Natural killer cell (primary cell): ENCODE measurements at regions of chr15 and their contacts with region 1.

Region 1: DNA sequence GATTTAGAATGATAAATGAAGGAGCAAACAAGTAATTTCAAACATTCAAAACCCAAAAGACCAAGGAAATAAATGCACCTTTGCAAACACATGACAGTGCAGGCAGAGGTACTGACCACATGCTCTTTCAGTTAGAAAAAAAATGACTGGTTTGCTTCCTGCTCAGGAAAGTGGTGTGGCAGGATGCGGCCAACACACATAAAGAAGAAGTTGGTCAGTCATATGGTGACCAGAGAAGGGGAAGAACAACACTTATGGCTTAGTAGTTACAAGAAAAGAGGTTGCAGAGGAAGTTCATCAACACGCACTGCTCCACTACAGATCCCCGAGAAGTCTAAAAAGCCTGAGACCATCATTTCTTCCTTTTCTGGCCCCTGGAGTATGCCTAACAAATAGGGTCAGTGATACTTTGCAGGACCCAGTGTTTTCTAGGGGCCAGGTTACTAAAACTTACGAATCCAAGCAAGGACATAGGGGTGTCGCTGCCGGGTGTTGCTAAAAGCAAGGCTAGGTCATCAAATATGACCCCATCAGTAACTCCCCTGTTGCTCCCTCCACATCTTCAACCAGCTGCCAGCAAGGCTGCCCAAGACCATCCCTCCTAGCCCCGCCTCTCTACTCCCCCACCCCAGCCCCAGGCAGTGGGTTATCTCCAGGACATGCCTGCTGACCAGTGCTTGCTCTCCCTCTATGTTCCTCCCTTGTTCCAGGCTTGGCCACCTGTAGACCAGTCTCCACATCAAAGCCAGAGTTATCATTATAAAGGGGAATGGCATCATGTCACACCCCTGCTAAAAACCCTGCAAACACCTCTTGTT is 11.2 kb downstream of the ATP8B4 start:
- DNase-seq: peak in 1 of 2 donors; percentile 19
- ATAC-seq: peak; percentile 68 to 91 (median 74)
- H3K4me3 ChIP-seq: no peak overlapping the region
- H3K4me3 Mint-ChIP-seq: peak overlapping the region; percentile 82
- H3K27ac ChIP-seq: peak overlapping the region; percentile 74
- H3K27ac Mint-ChIP-seq: peak overlapping the region; percentile 91 to 92
- H3K4me1 ChIP-seq: peaks cover 39% of the 10 kb centered on the region
- H3K4me1 Mint-ChIP-seq: peaks cover 77 to 92% of the 10 kb centered on the region in 2 donors
- H3K27me3 ChIP-seq: no peaks in the 10 kb centered on the region
- H3K27me3 Mint-ChIP-seq: no peaks in the 10 kb centered on the region
- CTCF ChIP-seq: no peak

Region 2: GRCh38 chr15:49620658-49621368 is 487.0 kb before region 1 on chr15 and contains the starts of genes DTWD1 and FAM227B:
- intact Hi-C with region 1: loop called (anchors 5 kb)
- DNase-seq: peak; percentile 88 to 97
- ATAC-seq: peak; percentile 96 to 100 (median 98)
- H3K4me3 ChIP-seq: peak within 1 kb of the TSS; percentile 97
- H3K4me3 Mint-ChIP-seq: peak within 1 kb of the TSS; percentile 98
- H3K27ac ChIP-seq: peak within 1 kb of the TSS; percentile 82
- H3K27ac Mint-ChIP-seq: peak within 1 kb of the TSS; percentile 96 to 97
- H3K4me1 ChIP-seq: peaks cover 6% of the 10 kb centered on the region
- H3K4me1 Mint-ChIP-seq: peaks cover 33 to 37% of the 10 kb centered on the region in 2 donors
- H3K27me3 ChIP-seq: no peaks in the 10 kb centered on the region
- H3K27me3 Mint-ChIP-seq: no peaks in the 10 kb centered on the region
- CTCF ChIP-seq: no peak
- total RNA-seq, gene DTWD1: 10.0 to 14.1 (median 12.3) TPM
- total RNA-seq, gene FAM227B: 3.8 to 5.0 (median 4.9) TPM

Region 3: GRCh38 chr15:49863431-49864205 is 244.2 kb before region 1 on chr15:
- intact Hi-C with region 1: no loop called
- DNase-seq: no peak
- ATAC-seq: no peak
- H3K4me3 ChIP-seq: no peak overlapping the region
- H3K4me3 Mint-ChIP-seq: no peak overlapping the region
- H3K27ac ChIP-seq: no peak overlapping the region
- H3K27ac Mint-ChIP-seq: no peak overlapping the region
- H3K4me1 ChIP-seq: no peaks in the 10 kb centered on the region
- H3K4me1 Mint-ChIP-seq: peaks cover 0 to 7% of the 10 kb centered on the region in 2 donors
- H3K27me3 ChIP-seq: no peaks in the 10 kb centered on the region
- H3K27me3 Mint-ChIP-seq: no peaks in the 10 kb centered on the region
- CTCF ChIP-seq: no peak

Region 4: DNA sequence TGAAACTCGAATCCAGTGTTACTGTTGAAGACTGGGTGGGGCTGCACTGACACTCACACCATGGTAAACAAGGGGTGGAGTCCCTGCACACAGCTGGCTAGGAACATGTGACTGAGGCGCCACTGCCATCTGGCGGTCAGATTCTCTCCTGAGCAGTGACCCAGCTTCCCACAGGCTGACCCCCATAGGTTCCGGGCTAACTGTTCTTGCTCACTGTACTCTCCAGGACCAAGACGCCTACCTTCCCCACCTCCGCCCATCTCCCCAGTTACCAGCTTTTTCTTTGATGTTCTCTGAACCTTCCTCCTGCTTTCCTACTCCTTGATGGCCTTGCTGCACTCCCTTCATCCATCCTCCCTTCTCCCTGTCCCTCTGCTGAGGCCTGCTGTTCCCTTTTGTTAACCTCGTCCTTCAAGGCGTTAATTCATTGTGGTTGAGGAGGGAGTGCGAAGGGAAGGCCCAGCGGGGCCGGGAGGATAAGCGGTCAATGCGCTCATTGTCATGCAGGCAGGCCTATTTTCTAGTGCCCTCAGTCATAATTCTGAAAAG is 103.9 kb before region 1 on chr15:
- intact Hi-C with region 1: loop called (anchors 5 kb)
- DNase-seq: peak; percentile 74 to 79
- ATAC-seq: peak; percentile 97 to 99 (median 99)
- H3K4me3 ChIP-seq: no peak overlapping the region
- H3K4me3 Mint-ChIP-seq: peak overlapping the region; percentile 75
- H3K27ac ChIP-seq: peak overlapping the region; percentile 66
- H3K27ac Mint-ChIP-seq: peak overlapping the region; percentile 88 to 95
- H3K4me1 ChIP-seq: peaks cover 13% of the 10 kb centered on the region
- H3K4me1 Mint-ChIP-seq: peaks cover 25 to 30% of the 10 kb centered on the region in 2 donors
- H3K27me3 ChIP-seq: no peaks in the 10 kb centered on the region
- H3K27me3 Mint-ChIP-seq: no peaks in the 10 kb centered on the region
- CTCF ChIP-seq: peak; percentile 73

Region 5: GRCh38 chr15:50046867-50047266 is 60.9 kb before region 1 on chr15:
- intact Hi-C with region 1: loop called (anchors 5 kb)
- DNase-seq: no peak
- ATAC-seq: peak; percentile 76 to 82 (median 80)
- H3K4me3 ChIP-seq: no peak overlapping the region
- H3K4me3 Mint-ChIP-seq: no peak overlapping the region
- H3K27ac ChIP-seq: peak overlapping the region; percentile 83
- H3K27ac Mint-ChIP-seq: peak overlapping the region; percentile 89 to 95
- H3K4me1 ChIP-seq: peaks cover 2% of the 10 kb centered on the region
- H3K4me1 Mint-ChIP-seq: peaks cover 41 to 53% of the 10 kb centered on the region in 2 donors
- H3K27me3 ChIP-seq: no peaks in the 10 kb centered on the region
- H3K27me3 Mint-ChIP-seq: no peaks in the 10 kb centered on the region
- CTCF ChIP-seq: no peak

Region 6: GRCh38 chr15:50066192-50066591 is 41.6 kb before region 1 on chr15:
- intact Hi-C with region 1: loop called (anchors 2 kb)
- DNase-seq: peak; percentile 45 to 48
- ATAC-seq: peak; percentile 84 to 94 (median 90)
- H3K4me3 ChIP-seq: no peak overlapping the region
- H3K4me3 Mint-ChIP-seq: peak overlapping the region; percentile 38
- H3K27ac ChIP-seq: peak overlapping the region; percentile 24
- H3K27ac Mint-ChIP-seq: peak overlapping the region; percentile 75 to 92
- H3K4me1 ChIP-seq: peaks cover 3% of the 10 kb centered on the region
- H3K4me1 Mint-ChIP-seq: peaks cover 64 to 76% of the 10 kb centered on the region in 2 donors
- H3K27me3 ChIP-seq: no peaks in the 10 kb centered on the region
- H3K27me3 Mint-ChIP-seq: no peaks in the 10 kb centered on the region
- CTCF ChIP-seq: no peak

Region 7: DNA sequence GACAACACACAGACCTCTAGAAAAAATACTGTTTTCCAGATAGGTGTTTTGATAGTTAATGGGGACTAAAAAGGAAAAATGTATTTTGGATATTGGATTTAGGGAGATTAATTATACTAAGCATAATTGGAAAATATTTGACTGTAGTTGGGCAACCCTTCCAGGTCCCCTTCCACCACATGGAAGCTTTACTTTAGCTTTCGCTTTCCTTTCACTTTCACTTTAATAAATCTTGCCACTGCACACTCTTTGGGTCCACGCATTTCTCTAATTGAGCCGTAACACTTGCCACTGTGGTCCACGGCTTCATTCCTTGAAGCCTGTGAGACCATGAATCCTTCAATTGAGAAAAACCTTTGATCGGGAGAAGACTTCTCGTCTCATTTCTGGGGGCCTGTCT is 1249.2 kb after region 1 on chr15:
- intact Hi-C with region 1: no loop called
- DNase-seq: no peak
- ATAC-seq: no peak
- H3K4me3 ChIP-seq: no peak overlapping the region
- H3K4me3 Mint-ChIP-seq: no peak overlapping the region
- H3K27ac ChIP-seq: no peak overlapping the region
- H3K27ac Mint-ChIP-seq: no peak overlapping the region
- H3K4me1 ChIP-seq: no peaks in the 10 kb centered on the region
- H3K4me1 Mint-ChIP-seq: no peaks in the 10 kb centered on the region
- H3K27me3 ChIP-seq: no peaks in the 10 kb centered on the region
- H3K27me3 Mint-ChIP-seq: peaks cover 0 to 4% of the 10 kb centered on the region in 2 donors
- CTCF ChIP-seq: no peak